A549 (cell line): ENCODE measurements at regions of chr1 and their contacts with region 1.

Region 1: DNA sequence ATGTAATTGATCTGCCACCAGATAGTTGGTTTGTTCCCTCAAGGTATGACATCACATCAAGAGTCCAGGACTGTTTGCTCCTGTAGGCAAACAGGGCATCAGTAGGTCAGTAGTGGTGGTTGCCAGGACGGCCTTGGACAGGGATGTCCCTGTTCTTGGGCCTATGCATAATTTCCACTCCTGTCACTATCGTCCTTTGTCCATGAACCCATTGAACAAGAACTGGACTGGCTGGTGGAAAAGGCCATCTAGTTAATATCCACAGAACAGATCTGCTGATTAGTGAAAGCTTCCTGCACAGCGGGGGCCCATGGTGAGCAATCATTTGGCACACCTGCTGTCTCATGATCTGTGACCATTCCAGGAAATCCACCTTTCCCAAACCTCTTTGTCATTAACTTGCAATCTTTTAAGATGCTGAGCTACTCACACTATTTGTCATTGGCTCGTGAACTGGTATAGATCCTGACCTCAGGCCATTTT is 12.4 kb upstream of the BSDC1 start:
- DNase-seq: no peak
- ATAC-seq: no peak
- H3K4me3 ChIP-seq: no peak overlapping the region
- H3K27ac ChIP-seq: no peak overlapping the region
- H3K4me1 ChIP-seq: no peaks in the 10 kb centered on the region
- CTCF ChIP-seq: no peak
- EP300 ChIP-seq: no peak
- POLR2A ChIP-seq: no peak
- RAD21 ChIP-seq: no peak

Region 2: GRCh38 chr1:32372149-32372756 is 34.4 kb before region 1 on chr1:
- CTCF ChIA-PET with region 1: no interaction called
- POLR2A ChIA-PET with region 1: no interaction called
- DNase-seq: no peak
- ATAC-seq: peak; percentile 48; a peak in 2 of 6 replicates
- H3K4me3 ChIP-seq: no peak overlapping the region
- H3K27ac ChIP-seq: no peak overlapping the region
- H3K4me1 ChIP-seq: no peaks in the 10 kb centered on the region
- CTCF ChIP-seq: no peak
- EP300 ChIP-seq: no peak
- POLR2A ChIP-seq: no peak
- RAD21 ChIP-seq: peak in 1 of 2 experiments; percentile 13; a peak in 1 of 5 replicates

Region 3: GRCh38 chr1:32741413-32742198 is 334.9 kb after region 1 on chr1:
- CTCF ChIA-PET with region 1: no interaction called
- POLR2A ChIA-PET with region 1: interaction called, 10 read pairs
- DNase-seq: peak in 1 of 2 experiments; percentile 69
- ATAC-seq: peak; percentile 70 to 76
- H3K4me3 ChIP-seq: peak overlapping the region; percentile 82
- H3K27ac ChIP-seq: peak overlapping the region; percentile 90 to 100
- H3K4me1 ChIP-seq: peaks cover 46% of the 10 kb centered on the region
- CTCF ChIP-seq: peak; percentile 52
- EP300 ChIP-seq: no peak
- POLR2A ChIP-seq: no peak
- RAD21 ChIP-seq: peak in 1 of 2 experiments; percentile 48; a peak in 3 of 5 replicates